ENCODE measurements at regions of chr19 and their contacts with region 1.

Region 1: DNA sequence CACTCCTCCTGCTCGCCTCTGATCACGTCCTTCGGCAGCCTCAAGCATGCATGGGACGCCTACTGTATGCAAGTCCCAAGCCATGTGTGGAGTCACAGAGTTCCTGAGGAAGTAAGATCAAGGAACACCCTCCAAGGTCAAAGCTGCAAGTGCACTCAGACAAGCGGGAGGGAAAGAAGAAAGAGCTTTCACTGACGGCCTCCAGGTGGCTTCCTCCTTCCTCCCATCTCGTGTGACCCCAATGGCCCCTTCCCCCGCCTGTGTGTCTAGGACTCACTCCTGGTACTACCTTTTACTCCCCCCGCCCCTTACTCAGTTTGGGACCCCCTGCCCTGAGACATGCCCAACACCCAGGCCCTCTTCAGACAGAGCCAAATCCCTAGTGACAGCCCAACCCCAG is 6.0 kb downstream of the HAUS8 start:
- DNase-seq: no peak
- ATAC-seq: no peak
- H3K4me3 ChIP-seq: no peak overlapping the region
- H3K4me3 Mint-ChIP-seq: no peak overlapping the region
- H3K27ac ChIP-seq: no peak overlapping the region
- H3K27ac Mint-ChIP-seq: peak overlapping the region in 2 of 9 donors; percentile 46 to 62
- H3K4me1 ChIP-seq: peaks cover 15 to 19% of the 10 kb centered on the region in 2 donors
- H3K4me1 Mint-ChIP-seq: peaks cover 32 to 52% (median 43%) of the 10 kb centered on the region in 7 donors
- H3K27me3 ChIP-seq: no peaks in the 10 kb centered on the region
- H3K27me3 Mint-ChIP-seq: no peaks in the 10 kb centered on the region

Region 2: GRCh38 chr19:17135001-17135853 is 66.0 kb after region 1 on chr19:
- CTCF ChIA-PET with region 1: no interaction called
- POLR2A ChIA-PET with region 1: no interaction called
- intact Hi-C with region 1: loop called in 1 of 2 experiments (anchors 2 kb)
- DNase-seq: peak in 8 of 9 donors; percentile 19 to 54 (median 46)
- ATAC-seq: peak; percentile 73
- H3K4me3 ChIP-seq: no peak overlapping the region
- H3K4me3 Mint-ChIP-seq: peak overlapping the region; percentile 41 to 89 (median 79)
- H3K27ac ChIP-seq: no peak overlapping the region
- H3K27ac Mint-ChIP-seq: peak overlapping the region; percentile 40 to 92 (median 85)
- H3K4me1 ChIP-seq: peaks cover 4 to 11% of the 10 kb centered on the region in 2 donors
- H3K4me1 Mint-ChIP-seq: peaks cover 0 to 34% (median 23%) of the 10 kb centered on the region in 7 donors
- H3K27me3 ChIP-seq: no peaks in the 10 kb centered on the region
- H3K27me3 Mint-ChIP-seq: no peaks in the 10 kb centered on the region

Region 3: DNA sequence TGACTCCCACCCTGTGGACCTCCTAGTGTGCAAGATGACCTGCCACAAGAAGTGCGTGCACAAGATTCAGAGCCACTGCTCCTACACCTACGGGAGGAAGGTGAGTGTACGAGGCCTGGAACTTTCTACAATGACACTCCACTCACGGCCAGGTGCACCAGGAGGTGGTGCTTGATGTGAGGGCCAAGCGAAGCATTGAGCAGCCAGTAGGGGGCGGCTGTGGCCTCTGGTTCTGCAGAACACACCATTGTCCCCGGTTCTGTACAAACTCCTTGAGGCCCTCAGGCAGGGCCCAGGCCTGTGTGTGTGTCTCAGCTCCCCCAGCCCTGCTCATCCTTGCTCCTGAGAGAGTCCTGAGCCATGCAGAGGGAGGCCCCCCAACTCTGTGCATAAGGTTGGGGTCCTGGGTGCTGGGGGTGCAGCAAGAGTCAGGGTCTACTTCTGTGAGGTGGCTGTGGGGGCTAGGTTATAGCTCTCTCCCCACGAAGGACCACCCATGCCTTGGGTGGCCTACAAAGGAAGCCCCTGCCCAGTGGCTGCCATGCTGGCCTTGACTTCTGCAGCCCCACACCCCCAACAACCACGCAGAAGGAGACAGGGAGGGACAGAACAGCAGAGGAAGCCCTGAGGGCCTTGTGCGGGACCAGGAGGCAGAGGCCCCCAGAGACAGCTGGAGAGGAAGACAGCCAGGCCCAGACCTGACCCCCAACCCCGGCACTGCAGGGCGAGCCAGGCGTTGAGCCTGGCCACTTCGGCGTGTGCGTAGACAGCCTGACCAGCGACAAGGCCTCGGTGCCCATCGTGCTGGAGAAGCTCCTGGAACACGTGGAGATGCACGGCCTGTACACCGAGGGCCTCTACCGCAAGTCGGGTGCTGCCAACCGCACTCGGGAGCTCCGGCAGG is 136.3 kb after region 1 on chr19:
- CTCF ChIA-PET with region 1: interaction called, 5 read pairs
- POLR2A ChIA-PET with region 1: no interaction called
- intact Hi-C with region 1: loop called in 1 of 2 experiments (anchors 1 kb)
- DNase-seq: peak; percentile 41 to 68 (median 54)
- ATAC-seq: peak; percentile 82
- H3K4me3 ChIP-seq: no peak overlapping the region
- H3K4me3 Mint-ChIP-seq: no peak overlapping the region
- H3K27ac ChIP-seq: no peak overlapping the region
- H3K27ac Mint-ChIP-seq: peak overlapping the region in 1 of 9 donors; percentile 38
- H3K4me1 ChIP-seq: no peaks in the 10 kb centered on the region
- H3K4me1 Mint-ChIP-seq: peaks cover 0 to 16% (median 0%) of the 10 kb centered on the region in 7 donors
- H3K27me3 ChIP-seq: no peaks in the 10 kb centered on the region
- H3K27me3 Mint-ChIP-seq: no peaks in the 10 kb centered on the region

Region 4: GRCh38 chr19:17235618-17236377 is 166.6 kb after region 1 on chr19:
- CTCF ChIA-PET with region 1: interaction called, 3 read pairs
- POLR2A ChIA-PET with region 1: interaction called, 3 read pairs
- intact Hi-C with region 1: loop called (anchors 1 to 2 kb)
- DNase-seq: peak; percentile 62 to 75 (median 73)
- ATAC-seq: peak; percentile 95
- H3K4me3 ChIP-seq: peak overlapping the region; percentile 74
- H3K4me3 Mint-ChIP-seq: peak overlapping the region in 9 of 10 donors; percentile 49 to 88 (median 83)
- H3K27ac ChIP-seq: peak overlapping the region; percentile 64
- H3K27ac Mint-ChIP-seq: peak overlapping the region in 1 of 9 donors; percentile 23
- H3K4me1 ChIP-seq: peaks cover 0 to 11% of the 10 kb centered on the region in 2 donors
- H3K4me1 Mint-ChIP-seq: peaks cover 4 to 22% (median 16%) of the 10 kb centered on the region in 7 donors
- H3K27me3 ChIP-seq: no peaks in the 10 kb centered on the region
- H3K27me3 Mint-ChIP-seq: no peaks in the 10 kb centered on the region

Region 5: DNA sequence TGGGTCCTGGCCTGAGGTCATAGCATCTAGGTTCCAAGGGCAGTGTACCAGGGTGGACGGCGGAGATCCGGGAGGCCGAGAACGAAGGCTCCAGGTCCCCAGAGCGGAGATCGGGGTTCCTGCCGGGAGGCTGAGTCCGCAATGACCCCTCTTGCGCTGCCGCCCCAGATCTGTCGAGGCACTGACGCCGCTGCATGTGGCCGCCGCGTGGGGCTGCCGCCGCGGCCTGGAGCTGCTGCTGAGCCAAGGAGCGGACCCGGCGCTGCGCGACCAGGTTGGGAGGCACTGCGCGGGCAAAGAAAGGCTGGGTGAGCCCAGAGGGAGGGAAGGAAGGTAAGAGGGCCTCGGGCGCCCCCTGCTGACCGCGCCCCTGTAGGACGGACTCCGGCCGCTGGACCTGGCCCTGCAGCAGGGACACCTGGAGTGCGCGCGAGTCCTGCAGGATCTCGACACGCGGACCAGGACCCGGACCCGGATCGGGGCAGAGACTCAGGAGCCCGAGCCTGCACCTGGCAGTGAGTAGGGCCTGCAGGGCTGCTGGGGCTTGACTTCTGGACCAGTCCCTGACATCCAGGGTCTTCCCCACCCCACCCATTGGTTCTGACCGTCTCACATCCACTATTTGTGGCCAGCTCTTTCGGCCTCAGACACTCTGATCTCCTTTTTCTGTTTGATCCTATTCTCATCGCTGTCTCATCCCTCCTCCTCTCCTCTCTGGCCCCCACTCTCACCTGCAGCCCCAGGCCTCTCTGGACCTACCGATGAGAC is 213.5 kb after region 1 on chr19:
- CTCF ChIA-PET with region 1: interaction called, 9 read pairs
- POLR2A ChIA-PET with region 1: no interaction called
- intact Hi-C with region 1: loop called (anchors 1 kb)
- DNase-seq: peak; percentile 58 to 86 (median 70)
- ATAC-seq: peak; percentile 97
- H3K4me3 ChIP-seq: peak overlapping the region; percentile 62
- H3K4me3 Mint-ChIP-seq: peak overlapping the region; percentile 75 to 90 (median 81)
- H3K27ac ChIP-seq: no peak overlapping the region
- H3K27ac Mint-ChIP-seq: peak overlapping the region in 3 of 9 donors; percentile 56 to 72 (median 62)
- H3K4me1 ChIP-seq: peaks cover 0 to 8% of the 10 kb centered on the region in 2 donors
- H3K4me1 Mint-ChIP-seq: peaks cover 0 to 9% (median 3%) of the 10 kb centered on the region in 7 donors
- H3K27me3 ChIP-seq: no peaks in the 10 kb centered on the region
- H3K27me3 Mint-ChIP-seq: peaks cover 0 to 4% (median 0%) of the 10 kb centered on the region in 5 donors

Measured in naive thymus-derived CD4-positive, alpha-beta T cell (primary cell).